Dorsolateral prefrontal cortex (tissue), 120 donors: ENCODE measurements at regions of chr13 and their contacts with region 1.

Region 1: GRCh38 chr13:40770934-40771618 is at the start of gene MRPS31:
- DNase-seq: peak; percentile 86 to 95 (median 94)
- H3K4me3 ChIP-seq: peak within 1 kb of the TSS; percentile 61 to 99 (median 86)
- H3K27ac ChIP-seq: peak within 1 kb of the TSS in 58 of 59 donors; percentile 33 to 93 (median 80)
- H3K27me3 ChIP-seq: no peaks in the 10 kb centered on the region
- CTCF ChIP-seq: peak in 42 of 56 donors; percentile 3 to 58 (median 36)
- total RNA-seq, gene MRPS31: 18.5 to 39.4 (median 27.6) TPM

Region 2: GRCh38 chr13:39777527-39778061 is 993.5 kb before region 1 on chr13:
- intact Hi-C with region 1: loop called in 1 of 2 experiments (anchors 10 kb)
- DNase-seq: no peak
- H3K4me3 ChIP-seq: no peak overlapping the region
- H3K27ac ChIP-seq: no peak overlapping the region
- H3K27me3 ChIP-seq: no peaks in the 10 kb centered on the region
- CTCF ChIP-seq: peak in 43 of 56 donors; percentile 18 to 62 (median 35)

Region 3: GRCh38 chr13:40813661-40814454 is 42.8 kb after region 1 on chr13:
- intact Hi-C with region 1: no loop called
- DNase-seq: no peak
- H3K4me3 ChIP-seq: no peak overlapping the region
- H3K27ac ChIP-seq: no peak overlapping the region
- H3K27me3 ChIP-seq: no peaks in the 10 kb centered on the region
- CTCF ChIP-seq: peak in 22 of 56 donors; percentile 9 to 40 (median 20)

Region 4: DNA sequence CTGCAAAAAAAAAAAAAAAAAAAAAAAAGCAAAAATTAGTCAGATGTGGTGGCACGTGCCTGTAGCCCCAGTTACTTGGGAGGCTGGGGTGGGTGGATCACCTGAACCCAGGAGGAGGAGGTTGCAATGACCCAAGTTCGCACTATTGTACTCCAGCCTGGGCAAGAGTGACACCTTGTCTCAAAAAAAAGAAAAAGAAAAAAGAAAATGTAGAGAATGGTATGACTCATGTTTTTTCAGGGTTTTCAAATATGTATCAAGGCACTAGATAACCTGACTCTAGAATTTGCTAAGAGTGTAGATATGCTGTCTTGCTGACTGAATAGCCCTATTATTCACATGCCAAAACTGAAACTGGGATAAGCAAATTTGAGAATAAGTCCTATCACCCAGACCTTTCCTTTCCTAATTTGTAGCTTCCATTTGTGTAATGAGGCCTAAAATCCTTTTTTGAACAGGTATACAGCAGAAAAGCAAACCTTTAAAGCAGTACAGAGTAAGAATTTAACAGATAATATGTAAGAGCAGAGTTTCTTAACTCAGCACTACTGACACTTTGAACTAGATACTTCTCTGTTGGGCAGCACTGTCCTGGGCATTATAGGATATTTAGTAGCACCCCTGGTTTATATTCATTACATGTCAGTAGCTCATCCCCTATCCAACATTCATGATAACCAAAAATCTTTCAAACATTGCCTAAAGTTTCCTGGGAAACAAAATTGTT is 139.4 kb after region 1 on chr13:
- intact Hi-C with region 1: loop called in 1 of 2 experiments (anchors 2 kb)
- DNase-seq: no peak
- H3K4me3 ChIP-seq: no peak overlapping the region
- H3K27ac ChIP-seq: peak overlapping the region in 2 of 59 donors; percentile 6 to 13
- H3K27me3 ChIP-seq: no peaks in the 10 kb centered on the region
- CTCF ChIP-seq: no peak

Region 5: DNA sequence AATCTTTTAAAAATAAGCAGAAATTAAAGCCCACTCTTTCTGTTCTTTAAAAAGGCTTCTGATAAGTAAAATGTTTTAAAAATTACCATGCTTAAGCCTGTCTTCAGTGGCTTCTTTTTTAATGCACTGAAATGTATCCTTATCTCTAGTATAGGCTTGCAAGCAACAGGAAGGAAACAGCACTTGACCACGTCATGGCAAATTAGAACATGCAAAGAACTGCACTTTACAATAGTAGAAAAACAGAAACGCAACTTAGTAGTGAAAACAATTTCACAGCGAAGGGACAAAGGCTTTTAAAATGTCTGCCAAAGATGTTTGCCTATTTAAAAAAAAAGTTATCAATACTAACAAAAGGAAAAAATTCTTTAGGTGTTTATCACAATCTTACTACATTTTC is 211.7 kb after region 1 on chr13:
- intact Hi-C with region 1: loop called in 1 of 2 experiments (anchors 10 kb)
- DNase-seq: peak in 1 of 10 donors; percentile 23
- H3K4me3 ChIP-seq: peak overlapping the region in 54 of 59 donors; percentile 0 to 55 (median 24)
- H3K27ac ChIP-seq: peak overlapping the region in 58 of 59 donors; percentile 9 to 92 (median 81)
- H3K27me3 ChIP-seq: no peaks in the 10 kb centered on the region
- CTCF ChIP-seq: no peak

Region 6: GRCh38 chr13:41029629-41030028 is 258.6 kb after region 1 on chr13:
- intact Hi-C with region 1: no loop called
- DNase-seq: no peak
- H3K4me3 ChIP-seq: no peak overlapping the region
- H3K27ac ChIP-seq: no peak overlapping the region
- H3K27me3 ChIP-seq: no peaks in the 10 kb centered on the region
- CTCF ChIP-seq: no peak